Activated CD4-positive, alpha-beta memory T cell treated with anti-CD3 and anti-CD28 coated beads for 36 hours (primary cell): ENCODE measurements at regions of chr9 and their contacts with region 1.

Region 1: DNA sequence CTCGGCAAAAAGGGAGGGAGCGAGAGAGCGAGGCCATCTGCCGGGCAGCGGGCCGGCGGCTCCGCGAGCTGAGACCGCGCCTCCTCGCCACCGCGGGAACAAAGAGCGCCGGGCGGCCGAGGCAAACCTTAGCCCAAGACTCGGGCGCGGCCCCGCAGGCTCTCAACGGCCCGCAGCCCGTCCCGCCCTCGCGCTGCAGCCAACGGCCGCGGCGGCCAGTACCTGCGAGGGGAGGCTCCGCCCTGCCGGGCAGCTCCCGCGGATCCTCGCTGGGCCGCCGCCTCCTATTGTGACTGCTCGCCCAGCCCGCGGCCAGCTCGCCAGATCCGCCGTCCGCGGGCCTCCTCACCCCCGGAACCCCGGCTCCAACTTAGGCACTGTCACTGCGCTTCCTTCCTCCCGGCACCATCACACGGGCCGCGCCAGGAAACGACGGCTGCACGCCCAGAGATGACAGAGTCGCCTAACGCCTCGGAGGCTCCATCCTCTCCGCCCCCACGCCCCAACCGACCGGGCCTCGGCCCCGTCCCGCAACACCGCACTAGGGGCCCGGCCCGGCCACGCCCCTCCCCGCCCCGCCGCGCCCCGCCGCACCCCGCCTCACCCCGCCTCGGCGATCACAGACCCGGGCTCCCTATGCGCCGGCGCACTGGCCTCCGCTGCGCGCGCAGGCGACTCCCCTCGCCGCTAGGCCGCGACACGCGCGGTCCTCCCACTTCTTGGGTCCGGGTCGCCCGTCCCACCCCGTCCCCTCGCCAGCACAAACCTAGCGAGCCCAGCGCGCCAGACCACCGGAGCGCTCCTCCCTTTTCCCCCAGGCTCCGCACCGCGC is 479 bp upstream of the RNF38 start:
- DNase-seq: peak; percentile 95
- H3K4me3 Mint-ChIP-seq: peak overlapping the region; percentile 95
- H3K27ac Mint-ChIP-seq: peak overlapping the region; percentile 98
- H3K4me1 Mint-ChIP-seq: peaks cover 36% of the 10 kb centered on the region
- H3K27me3 Mint-ChIP-seq: no peaks in the 10 kb centered on the region

Region 2: DNA sequence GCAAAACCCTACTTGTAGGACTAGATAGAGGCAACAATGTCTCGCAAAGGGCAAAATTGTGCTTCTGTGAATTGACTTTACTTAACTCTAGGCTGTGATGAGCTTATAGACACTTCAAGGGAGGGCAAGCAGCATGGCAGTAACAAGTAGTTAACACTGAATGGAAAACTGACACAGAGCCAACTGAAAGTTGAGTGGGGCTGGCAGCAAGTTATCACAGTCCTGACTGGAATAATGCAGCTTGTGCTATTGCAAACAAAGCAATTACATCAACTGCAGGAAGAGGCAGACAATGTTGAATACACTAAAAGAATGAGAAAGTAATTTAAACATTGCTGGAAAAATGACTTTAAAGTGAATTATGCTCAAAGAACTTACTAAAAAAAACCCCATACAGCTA is 62.7 kb before region 1 on chr9:
- CTCF ChIA-PET with region 1: no interaction called
- POLR2A ChIA-PET with region 1: no interaction called
- intact Hi-C with region 1: loop called (anchors 5 kb)
- DNase-seq: no peak
- H3K4me3 Mint-ChIP-seq: no peak overlapping the region
- H3K27ac Mint-ChIP-seq: no peak overlapping the region
- H3K4me1 Mint-ChIP-seq: peaks cover 12% of the 10 kb centered on the region
- H3K27me3 Mint-ChIP-seq: no peaks in the 10 kb centered on the region

Region 3: GRCh38 chr9:36470643-36471290 is 70.2 kb after region 1 on chr9:
- CTCF ChIA-PET with region 1: no interaction called
- POLR2A ChIA-PET with region 1: no interaction called
- intact Hi-C with region 1: loop called (anchors 2 kb)
- DNase-seq: peak; percentile 81
- H3K4me3 Mint-ChIP-seq: peak overlapping the region; percentile 67
- H3K27ac Mint-ChIP-seq: peak overlapping the region; percentile 92
- H3K4me1 Mint-ChIP-seq: peaks cover 32% of the 10 kb centered on the region
- H3K27me3 Mint-ChIP-seq: no peaks in the 10 kb centered on the region

Region 4: DNA sequence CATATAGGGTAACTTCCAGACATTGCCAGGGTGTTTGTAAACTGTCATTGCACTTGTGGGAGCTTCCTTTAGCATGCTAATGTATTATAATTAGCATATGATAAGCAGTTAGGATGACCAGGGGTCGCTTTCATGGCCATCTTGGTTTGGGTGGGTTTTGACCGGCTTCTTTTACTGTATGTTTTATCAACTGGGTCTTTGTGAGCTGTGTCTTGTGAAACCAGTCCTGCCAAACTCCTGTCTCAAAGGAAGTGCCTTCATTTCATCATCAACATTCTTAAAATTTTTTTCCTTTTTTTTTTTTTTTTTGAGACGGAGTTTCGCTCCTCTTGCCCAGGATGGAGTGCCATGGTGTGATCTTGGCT is 160.3 kb after region 1 on chr9:
- CTCF ChIA-PET with region 1: interaction called, 342 read pairs
- POLR2A ChIA-PET with region 1: no interaction called
- intact Hi-C with region 1: no loop called
- DNase-seq: no peak
- H3K4me3 Mint-ChIP-seq: no peak overlapping the region
- H3K27ac Mint-ChIP-seq: no peak overlapping the region
- H3K4me1 Mint-ChIP-seq: no peaks in the 10 kb centered on the region
- H3K27me3 Mint-ChIP-seq: no peaks in the 10 kb centered on the region

Region 5: GRCh38 chr9:37046683-37047082 is 646.1 kb after region 1 on chr9:
- CTCF ChIA-PET with region 1: no interaction called
- POLR2A ChIA-PET with region 1: no interaction called
- intact Hi-C with region 1: no loop called
- DNase-seq: no peak
- H3K4me3 Mint-ChIP-seq: no peak overlapping the region
- H3K27ac Mint-ChIP-seq: no peak overlapping the region
- H3K4me1 Mint-ChIP-seq: no peaks in the 10 kb centered on the region
- H3K27me3 Mint-ChIP-seq: peaks cover 23% of the 10 kb centered on the region